Activated CD4-positive, alpha-beta T cell treated with anti-CD3 and anti-CD28 coated beads, Interleukin-2, amount 10 ng/mL, durations not matched to agents 24 days and 14 days (primary cell): ENCODE measurements at regions of chr19 and their contacts with region 1.

Region 1: GRCh38 chr19:31356587-31357314 is 7.5 kb upstream of the TSHZ3 start:
- DNase-seq: peak; percentile 87
- H3K4me3 Mint-ChIP-seq: peak overlapping the region; percentile 9
- H3K27ac Mint-ChIP-seq: no peak overlapping the region
- H3K4me1 Mint-ChIP-seq: peaks cover 24% of the 10 kb centered on the region
- H3K27me3 Mint-ChIP-seq: peaks cover 75% of the 10 kb centered on the region

Region 2: DNA sequence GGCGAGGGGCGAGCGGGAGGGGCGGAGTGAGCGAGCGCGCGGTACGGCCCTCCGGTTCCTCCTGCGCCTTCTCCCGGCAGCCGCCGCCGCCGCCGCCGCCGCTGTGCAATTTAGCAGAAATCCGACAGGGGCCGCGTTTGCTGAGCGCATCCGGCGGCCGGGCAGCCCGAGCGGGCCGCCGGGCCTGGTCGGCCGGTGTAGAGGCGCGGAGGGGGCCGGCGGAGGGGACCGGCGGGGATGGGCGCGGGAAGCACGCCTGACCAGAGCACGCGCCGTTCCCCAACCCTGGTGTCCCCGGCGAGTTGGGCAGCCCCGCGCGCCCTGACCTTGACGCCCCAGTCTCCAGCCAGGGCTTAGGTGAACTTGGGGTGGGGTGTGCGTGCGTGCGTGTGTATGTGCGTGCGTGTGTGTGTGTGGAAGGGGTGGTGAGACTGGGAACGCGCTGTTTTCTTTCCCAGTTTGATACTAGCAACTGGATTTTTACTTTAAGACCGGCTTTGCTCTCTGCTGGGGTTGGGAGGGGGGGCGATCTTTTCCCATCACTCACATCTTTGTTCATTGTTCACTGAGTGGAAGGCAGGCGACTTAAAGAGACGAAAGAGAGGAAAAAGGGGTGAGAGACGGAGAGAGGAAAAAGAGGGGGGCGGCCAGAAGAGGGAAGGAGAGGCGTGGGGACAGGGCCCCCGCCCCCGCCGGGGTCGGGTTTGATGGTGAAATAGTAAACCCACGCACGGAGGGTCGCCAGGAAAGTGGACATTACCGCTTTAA is 1128.9 kb before region 1 on chr19:
- intact Hi-C with region 1: loop called (anchors 2 kb)
- DNase-seq: peak; percentile 89
- H3K4me3 Mint-ChIP-seq: peak overlapping the region; percentile 89
- H3K27ac Mint-ChIP-seq: no peak overlapping the region
- H3K4me1 Mint-ChIP-seq: peaks cover 21% of the 10 kb centered on the region
- H3K27me3 Mint-ChIP-seq: peaks cover 70% of the 10 kb centered on the region

Region 3: GRCh38 chr19:30669329-30670010 is 687.3 kb before region 1 on chr19:
- intact Hi-C with region 1: loop called (anchors 5 kb)
- DNase-seq: peak; percentile 83
- H3K4me3 Mint-ChIP-seq: no peak overlapping the region
- H3K27ac Mint-ChIP-seq: no peak overlapping the region
- H3K4me1 Mint-ChIP-seq: peaks cover 2% of the 10 kb centered on the region
- H3K27me3 Mint-ChIP-seq: peaks cover 2% of the 10 kb centered on the region

Region 4: GRCh38 chr19:30784850-30785457 is 571.8 kb before region 1 on chr19:
- intact Hi-C with region 1: loop called (anchors 1 kb)
- DNase-seq: peak; percentile 87
- H3K4me3 Mint-ChIP-seq: no peak overlapping the region
- H3K27ac Mint-ChIP-seq: no peak overlapping the region
- H3K4me1 Mint-ChIP-seq: peaks cover 2% of the 10 kb centered on the region
- H3K27me3 Mint-ChIP-seq: no peaks in the 10 kb centered on the region

Region 5: GRCh38 chr19:31054430-31054829 is 302.3 kb before region 1 on chr19:
- intact Hi-C with region 1: loop called (anchors 2 kb)
- DNase-seq: peak; percentile 78
- H3K4me3 Mint-ChIP-seq: no peak overlapping the region
- H3K27ac Mint-ChIP-seq: no peak overlapping the region
- H3K4me1 Mint-ChIP-seq: no peaks in the 10 kb centered on the region
- H3K27me3 Mint-ChIP-seq: peaks cover 2% of the 10 kb centered on the region

Region 6: GRCh38 chr19:31110331-31110730 is 246.4 kb before region 1 on chr19:
- intact Hi-C with region 1: loop called (anchors 5 kb)
- DNase-seq: peak; percentile 58
- H3K4me3 Mint-ChIP-seq: no peak overlapping the region
- H3K27ac Mint-ChIP-seq: no peak overlapping the region
- H3K4me1 Mint-ChIP-seq: peaks cover 11% of the 10 kb centered on the region
- H3K27me3 Mint-ChIP-seq: peaks cover 21% of the 10 kb centered on the region

Region 7: DNA sequence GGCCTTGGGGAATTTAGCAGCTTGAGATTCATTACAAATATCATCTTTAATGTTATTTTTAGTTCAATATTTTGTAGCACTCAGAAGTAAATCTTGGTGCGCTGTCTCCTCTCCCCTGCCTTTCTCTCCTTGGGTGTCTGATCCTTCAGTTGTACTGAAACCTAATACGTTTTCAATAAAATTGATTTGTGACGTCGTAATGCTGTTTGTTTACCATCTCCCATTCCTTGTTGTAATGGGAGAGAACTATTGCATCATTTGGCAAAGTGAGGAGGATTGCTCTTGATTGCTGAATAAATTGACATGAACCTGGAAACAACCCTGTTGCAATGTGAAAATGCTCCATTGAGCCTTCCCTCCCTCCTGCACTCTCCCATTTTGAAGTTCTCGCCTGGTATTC is 35.7 kb after region 1 on chr19:
- intact Hi-C with region 1: no loop called
- DNase-seq: no peak
- H3K4me3 Mint-ChIP-seq: no peak overlapping the region
- H3K27ac Mint-ChIP-seq: no peak overlapping the region
- H3K4me1 Mint-ChIP-seq: no peaks in the 10 kb centered on the region
- H3K27me3 Mint-ChIP-seq: no peaks in the 10 kb centered on the region